ENCODE measurements at regions of chr16 and their contacts with region 1.

Region 1: GRCh38 chr16:38939-39892 is 14.2 kb downstream of the POLR3K start:
- DNase-seq: peak; percentile 61
- ATAC-seq: peak; percentile 86
- H3K4me3 Mint-ChIP-seq: peak overlapping the region; percentile 57
- H3K27ac Mint-ChIP-seq: peak overlapping the region; percentile 95
- H3K4me1 Mint-ChIP-seq: peaks cover 65% of the 10 kb centered on the region
- H3K27me3 Mint-ChIP-seq: no peaks in the 10 kb centered on the region
- CTCF ChIP-seq: no peak

Region 2: DNA sequence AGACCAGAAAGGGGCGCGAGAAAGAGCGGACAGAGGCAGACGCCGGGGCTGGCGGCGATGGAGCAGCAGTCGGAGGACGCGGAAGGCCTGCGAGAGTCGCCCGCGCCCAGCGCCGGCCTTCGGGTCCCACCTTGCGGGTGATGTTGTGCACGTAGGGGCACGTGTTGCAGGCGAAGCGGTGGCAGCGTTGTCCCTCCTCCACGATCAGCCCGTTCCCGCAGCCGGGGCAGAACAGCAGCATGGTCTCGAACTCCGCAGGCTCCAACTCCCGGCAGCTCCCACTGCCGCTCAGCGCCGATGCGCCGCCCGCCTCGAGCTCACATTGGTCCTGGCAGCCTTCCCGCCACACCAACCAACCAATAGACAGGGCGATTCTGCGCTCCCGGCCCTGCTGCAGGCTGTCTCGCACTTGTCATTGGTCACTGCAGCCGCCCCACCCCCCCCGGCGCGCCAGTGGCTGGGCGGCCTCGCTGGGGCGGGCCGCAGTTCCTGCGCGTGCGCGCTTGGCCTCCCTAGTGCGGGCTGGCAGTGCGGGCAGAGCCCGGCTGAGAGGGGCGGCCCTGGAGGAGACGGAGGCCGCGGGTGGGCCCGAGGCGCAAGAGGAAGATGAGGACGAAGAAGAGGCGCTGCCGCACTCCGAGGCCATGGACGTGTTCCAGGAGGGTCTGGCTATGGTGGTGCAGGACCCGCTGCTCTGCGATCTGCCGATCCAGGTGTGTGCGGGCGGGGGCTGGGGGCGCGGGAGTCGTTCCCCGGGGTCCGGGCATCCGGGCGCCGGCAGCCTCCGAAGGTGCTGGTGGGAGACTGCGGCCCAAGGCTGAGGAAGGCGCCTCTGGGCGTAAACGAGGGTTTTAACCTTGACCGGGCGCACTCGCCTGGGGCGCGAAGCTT is 14.4 kb after region 1 on chr16 and contains the starts of genes POLR3K and SNRNP25:
- CTCF ChIA-PET with region 1: interaction called, 11 read pairs
- POLR2A ChIA-PET with region 1: interaction called, 50 read pairs
- intact Hi-C with region 1: loop called (anchors 1 kb)
- DNase-seq: peak; percentile 88
- ATAC-seq: peak; percentile 96
- H3K4me3 Mint-ChIP-seq: peak within 1 kb of the TSS; percentile 95
- H3K27ac Mint-ChIP-seq: peak within 1 kb of the TSS; percentile 88
- H3K4me1 Mint-ChIP-seq: peaks cover 27% of the 10 kb centered on the region
- H3K27me3 Mint-ChIP-seq: no peaks in the 10 kb centered on the region
- CTCF ChIP-seq: no peak
- total RNA-seq, gene POLR3K: 26.5 and 30.6 TPM in 2 replicates
- total RNA-seq, gene SNRNP25: 34.9 and 36.6 TPM in 2 replicates

Region 3: DNA sequence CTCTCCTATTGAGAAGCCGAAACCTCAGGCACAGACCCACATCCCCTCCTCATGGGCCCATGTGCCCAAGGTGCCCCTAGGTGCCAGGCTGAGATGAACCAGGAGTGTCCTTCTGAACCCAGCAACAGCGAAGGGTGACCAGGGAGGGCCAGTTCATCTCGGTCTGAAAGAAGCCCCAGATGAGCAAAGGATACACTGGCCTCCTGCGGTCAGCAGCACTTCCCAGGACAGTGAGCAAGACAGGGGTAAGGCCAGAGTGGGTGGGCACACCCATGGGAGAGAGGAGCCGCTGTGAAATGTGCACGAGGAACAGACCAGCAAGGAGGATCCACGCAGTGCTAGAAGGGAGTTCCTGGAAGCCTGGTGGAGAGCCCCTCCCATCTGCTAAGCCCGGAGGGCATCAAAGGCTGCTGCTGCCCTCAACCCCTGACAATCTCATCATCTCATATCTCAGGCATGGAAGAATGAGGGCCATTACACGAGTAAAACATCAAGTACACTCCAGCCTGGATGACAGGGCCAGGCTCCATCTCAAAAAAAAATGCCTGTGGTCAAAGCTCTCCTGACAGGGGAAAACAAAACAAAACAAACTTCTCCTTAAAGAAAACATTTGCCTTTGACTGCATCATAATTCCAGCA is 109.9 kb after region 1 on chr16:
- CTCF ChIA-PET with region 1: no interaction called
- POLR2A ChIA-PET with region 1: no interaction called
- intact Hi-C with region 1: no loop called
- DNase-seq: no peak
- ATAC-seq: no peak
- H3K4me3 Mint-ChIP-seq: no peak overlapping the region
- H3K27ac Mint-ChIP-seq: no peak overlapping the region
- H3K4me1 Mint-ChIP-seq: no peaks in the 10 kb centered on the region
- H3K27me3 Mint-ChIP-seq: peaks cover 24% of the 10 kb centered on the region
- CTCF ChIP-seq: no peak

Region 4: DNA sequence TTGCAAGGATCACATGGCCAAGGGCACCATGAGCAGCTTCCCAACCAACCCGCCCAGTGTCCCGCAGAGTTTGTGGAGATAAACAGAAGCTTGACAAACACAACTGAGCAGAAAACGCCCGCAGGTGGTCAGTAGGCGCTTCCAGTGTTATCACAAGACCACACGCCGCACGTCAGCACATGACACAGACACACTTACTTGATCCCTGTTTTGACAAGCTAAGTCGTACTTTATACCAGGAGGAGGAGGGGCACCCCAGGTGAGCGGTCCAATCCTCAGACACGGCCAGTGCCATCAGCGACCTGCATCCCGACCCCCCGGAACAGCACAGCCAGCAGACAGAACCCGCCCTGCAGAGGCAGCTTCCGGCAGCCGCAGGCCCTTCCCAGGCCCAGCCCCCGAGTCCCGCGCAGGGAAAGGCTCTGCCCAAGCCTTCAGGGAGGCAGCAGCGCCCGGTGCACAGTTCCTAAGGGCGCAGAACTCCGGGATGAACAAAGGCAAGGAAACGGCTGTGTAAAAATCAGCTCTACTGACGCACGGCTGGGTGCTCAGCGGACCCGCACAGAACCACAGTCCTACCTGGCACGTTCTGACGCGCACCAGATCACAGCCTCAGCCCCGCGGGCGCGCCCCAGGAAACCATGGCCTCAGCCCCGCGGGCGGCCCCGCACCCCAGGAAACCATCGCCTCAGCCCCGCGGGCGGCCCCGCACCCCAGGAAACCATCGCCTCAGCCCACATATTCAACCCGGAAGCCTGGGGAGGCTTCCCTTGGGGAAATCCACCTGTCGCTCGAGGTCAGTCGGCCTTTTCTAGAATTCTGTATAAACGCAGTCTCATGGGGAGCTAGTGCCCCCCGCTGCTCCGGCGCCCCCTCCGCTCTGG is 285.5 kb after region 1 on chr16:
- CTCF ChIA-PET with region 1: no interaction called
- POLR2A ChIA-PET with region 1: no interaction called
- intact Hi-C with region 1: no loop called
- DNase-seq: peak; percentile 32
- ATAC-seq: peak; percentile 79
- H3K4me3 Mint-ChIP-seq: peak overlapping the region; percentile 75
- H3K27ac Mint-ChIP-seq: peak overlapping the region; percentile 70
- H3K4me1 Mint-ChIP-seq: peaks cover 51% of the 10 kb centered on the region
- H3K27me3 Mint-ChIP-seq: no peaks in the 10 kb centered on the region
- CTCF ChIP-seq: no peak